Naive thymus-derived CD4-positive, alpha-beta T cell (primary cell): ENCODE measurements at regions of chr11 and their contacts with region 1.

Region 1: GRCh38 chr11:6646918-6647679 is 8.5 kb downstream of the DCHS1 start:
- DNase-seq: peak in 6 of 9 donors; percentile 32 to 39 (median 35)
- ATAC-seq: peak; percentile 73
- H3K4me3 ChIP-seq: peak overlapping the region; percentile 35
- H3K4me3 Mint-ChIP-seq: no peak overlapping the region
- H3K27ac ChIP-seq: peak overlapping the region; percentile 72
- H3K27ac Mint-ChIP-seq: no peak overlapping the region
- H3K4me1 ChIP-seq: peaks cover 21 to 49% of the 10 kb centered on the region in 2 donors
- H3K4me1 Mint-ChIP-seq: no peaks in the 10 kb centered on the region
- H3K27me3 ChIP-seq: no peaks in the 10 kb centered on the region
- H3K27me3 Mint-ChIP-seq: no peaks in the 10 kb centered on the region

Region 2: DNA sequence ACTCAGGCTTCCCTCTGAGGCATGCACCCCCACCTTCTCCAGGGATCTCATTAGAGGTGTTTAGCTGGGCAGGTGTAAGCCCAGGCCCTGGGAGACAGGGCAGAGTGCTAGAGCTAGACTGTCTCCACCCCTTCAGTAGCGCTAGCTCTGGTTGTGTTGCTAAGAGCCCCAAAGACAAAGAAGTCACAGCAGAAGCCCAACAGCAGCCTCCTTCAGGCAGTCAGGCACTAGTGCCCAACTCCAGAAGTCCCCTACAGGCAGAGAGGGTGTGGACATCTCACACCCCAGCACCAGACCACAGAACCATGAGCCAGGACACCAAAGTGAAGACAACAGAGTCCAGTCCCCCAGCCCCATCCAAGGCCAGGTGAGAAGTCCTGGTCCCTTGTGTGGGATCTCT is 408.2 kb before region 1 on chr11 and contains the start of gene CNGA4:
- CTCF ChIA-PET with region 1: no interaction called
- POLR2A ChIA-PET with region 1: no interaction called
- intact Hi-C with region 1: no loop called
- DNase-seq: no peak
- ATAC-seq: no peak
- H3K4me3 ChIP-seq: no peak within 1 kb of the TSS
- H3K4me3 Mint-ChIP-seq: peak within 1 kb of the TSS in 1 of 10 donors; percentile 12
- H3K27ac ChIP-seq: no peak within 1 kb of the TSS
- H3K27ac Mint-ChIP-seq: no peak within 1 kb of the TSS
- H3K4me1 ChIP-seq: peaks cover 4% of the 10 kb centered on the region in 2 donors
- H3K4me1 Mint-ChIP-seq: peaks cover 9 to 18% (median 12%) of the 10 kb centered on the region in 7 donors
- H3K27me3 ChIP-seq: no peaks in the 10 kb centered on the region
- H3K27me3 Mint-ChIP-seq: peaks cover 9 to 19% (median 14%) of the 10 kb centered on the region in 5 donors
- total RNA-seq, gene CNGA4: 0.32 to 0.62 (median 0.37) TPM in 4 of 5 experiments, not detected in the other

Region 3: GRCh38 chr11:6586434-6587359 is 60.4 kb before region 1 on chr11:
- CTCF ChIA-PET with region 1: no interaction called
- POLR2A ChIA-PET with region 1: no interaction called
- intact Hi-C with region 1: no loop called
- DNase-seq: no peak
- ATAC-seq: no peak
- H3K4me3 ChIP-seq: no peak overlapping the region
- H3K4me3 Mint-ChIP-seq: no peak overlapping the region
- H3K27ac ChIP-seq: no peak overlapping the region
- H3K27ac Mint-ChIP-seq: no peak overlapping the region
- H3K4me1 ChIP-seq: no peaks in the 10 kb centered on the region
- H3K4me1 Mint-ChIP-seq: peaks cover 0 to 8% (median under 1%) of the 10 kb centered on the region in 7 donors
- H3K27me3 ChIP-seq: no peaks in the 10 kb centered on the region
- H3K27me3 Mint-ChIP-seq: no peaks in the 10 kb centered on the region

Region 4: DNA sequence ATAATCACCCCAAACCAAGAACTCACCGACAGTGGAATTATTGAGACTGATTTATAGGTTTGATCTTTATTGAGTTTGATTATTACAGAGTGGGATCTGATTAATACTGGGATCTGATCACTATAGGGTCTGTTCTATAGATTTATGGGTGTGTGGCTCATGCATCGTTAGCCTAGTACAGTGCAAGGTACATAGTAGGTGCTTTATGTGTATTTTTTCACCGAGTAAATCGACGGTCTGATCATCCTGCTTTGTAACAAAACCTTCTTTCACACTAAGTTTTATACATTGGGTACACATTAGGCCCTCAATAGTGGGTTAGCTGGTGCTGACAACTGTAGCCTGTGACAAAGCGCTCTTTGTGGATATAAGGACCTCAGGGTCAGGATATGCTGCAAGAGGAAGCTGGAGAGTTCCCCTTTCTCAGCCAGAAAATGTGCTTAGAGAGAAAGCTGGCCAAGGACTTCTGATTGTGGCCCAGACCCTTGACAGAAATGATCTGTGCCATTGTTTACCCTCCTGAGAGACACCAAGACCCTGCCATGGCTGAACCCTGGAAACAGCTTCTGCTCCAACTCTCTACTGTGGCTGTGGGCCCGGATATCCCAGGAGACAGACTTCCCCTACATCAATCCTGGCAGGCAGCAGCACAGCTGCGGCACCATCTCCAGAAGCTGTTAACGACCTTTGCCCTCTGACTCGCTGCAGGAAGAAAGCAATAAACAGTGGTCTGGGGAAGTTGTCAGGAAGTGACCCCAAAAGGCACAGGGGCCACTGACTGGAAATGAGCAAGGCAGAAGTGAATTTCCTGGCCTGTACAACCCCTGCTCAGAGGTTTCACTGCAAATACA is 11.8 kb before region 1 on chr11:
- CTCF ChIA-PET with region 1: interaction called, 3 read pairs
- POLR2A ChIA-PET with region 1: interaction called, 4 read pairs
- intact Hi-C with region 1: loop called in 1 of 2 experiments (anchors 1 kb)
- DNase-seq: no peak
- ATAC-seq: peak; percentile 69
- H3K4me3 ChIP-seq: no peak overlapping the region
- H3K4me3 Mint-ChIP-seq: no peak overlapping the region
- H3K27ac ChIP-seq: no peak overlapping the region
- H3K27ac Mint-ChIP-seq: peak overlapping the region in 2 of 9 donors; percentile 3 to 39
- H3K4me1 ChIP-seq: no peaks in the 10 kb centered on the region
- H3K4me1 Mint-ChIP-seq: peaks cover 0 to 7% (median 5%) of the 10 kb centered on the region in 7 donors
- H3K27me3 ChIP-seq: no peaks in the 10 kb centered on the region
- H3K27me3 Mint-ChIP-seq: no peaks in the 10 kb centered on the region

Region 5: GRCh38 chr11:6674862-6675261 is 27.8 kb after region 1 on chr11:
- CTCF ChIA-PET with region 1: no interaction called
- POLR2A ChIA-PET with region 1: interaction called, 14 read pairs
- intact Hi-C with region 1: no loop called
- DNase-seq: no peak
- ATAC-seq: no peak
- H3K4me3 ChIP-seq: no peak overlapping the region
- H3K4me3 Mint-ChIP-seq: peak overlapping the region in 4 of 10 donors; percentile 18 to 85 (median 42)
- H3K27ac ChIP-seq: no peak overlapping the region
- H3K27ac Mint-ChIP-seq: peak overlapping the region in 1 of 9 donors; percentile 9
- H3K4me1 ChIP-seq: peaks cover 16 to 50% of the 10 kb centered on the region in 2 donors
- H3K4me1 Mint-ChIP-seq: peaks cover 44 to 77% (median 65%) of the 10 kb centered on the region in 7 donors
- H3K27me3 ChIP-seq: no peaks in the 10 kb centered on the region
- H3K27me3 Mint-ChIP-seq: no peaks in the 10 kb centered on the region